Panc1 (cell line): ENCODE measurements at regions of chr1 and their contacts with region 1.

Region 1: GRCh38 chr1:83954166-83954823 is 44.6 kb downstream of the TTLL7 start:
- DNase-seq: no peak
- ATAC-seq: no peak
- H3K4me3 ChIP-seq: no peak overlapping the region
- H3K27ac ChIP-seq: no peak overlapping the region
- H3K4me1 ChIP-seq: no peaks in the 10 kb centered on the region
- H3K27me3 ChIP-seq: no peaks in the 10 kb centered on the region
- CTCF ChIP-seq: no peak

Region 2: GRCh38 chr1:82837766-82838465 is 1116.4 kb before region 1 on chr1:
- CTCF ChIA-PET with region 1: no interaction called
- POLR2A ChIA-PET with region 1: interaction called, 14 read pairs
- in situ Hi-C with region 1: no loop called
- intact Hi-C with region 1: no loop called
- DNase-seq: no peak
- ATAC-seq: no peak
- H3K4me3 ChIP-seq: no peak overlapping the region
- H3K27ac ChIP-seq: no peak overlapping the region
- H3K4me1 ChIP-seq: no peaks in the 10 kb centered on the region
- H3K27me3 ChIP-seq: peaks cover 2% of the 10 kb centered on the region; the same call in 1 of the 2 replicates
- CTCF ChIP-seq: no peak

Region 3: DNA sequence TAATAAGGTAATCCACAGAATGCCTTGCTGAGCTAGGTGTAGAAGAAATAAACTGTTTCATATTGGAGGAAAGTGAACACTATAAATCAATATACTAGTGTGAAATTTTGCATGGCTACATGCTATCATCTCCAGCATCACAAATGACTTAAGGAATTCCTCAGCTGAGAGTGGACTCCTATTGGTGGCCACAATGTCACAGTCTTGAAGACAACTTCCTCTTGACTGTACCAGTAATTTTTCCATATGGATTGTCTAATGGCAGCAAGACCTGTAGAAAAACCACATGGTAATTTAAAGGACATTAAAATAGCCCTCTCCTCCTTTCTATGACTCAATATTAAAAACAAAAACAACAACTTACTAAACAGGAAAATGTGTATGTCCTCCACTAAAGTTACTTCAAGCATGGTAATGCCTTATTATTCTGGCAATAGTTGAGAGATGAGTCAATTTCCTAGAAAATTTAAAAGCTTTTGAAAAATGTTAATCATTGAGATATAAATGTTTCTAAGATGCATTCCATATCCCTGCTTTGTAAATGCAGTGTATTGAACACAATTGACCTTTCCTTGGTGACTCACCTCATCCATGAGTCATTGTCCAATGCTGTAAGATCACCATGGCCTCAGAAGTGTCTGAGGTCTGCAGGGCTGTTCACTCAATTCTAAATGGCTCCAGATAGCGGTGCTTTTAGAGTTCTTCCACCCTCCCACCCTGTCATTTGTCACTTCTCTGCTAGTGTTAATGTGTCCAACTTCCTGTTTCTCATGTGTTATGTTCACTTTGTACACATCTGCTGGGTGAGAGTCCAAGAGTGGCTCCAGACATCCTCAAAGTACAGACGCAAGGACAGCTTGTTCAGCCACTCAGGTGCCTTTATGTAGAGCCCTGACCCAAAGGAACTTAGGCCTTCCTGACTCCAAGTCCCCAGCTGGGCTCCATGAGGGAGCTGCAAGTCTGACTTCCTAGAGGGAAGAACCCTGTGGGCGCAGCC is 411.2 kb after region 1 on chr1:
- CTCF ChIA-PET with region 1: no interaction called
- POLR2A ChIA-PET with region 1: no interaction called
- in situ Hi-C with region 1: no loop called
- intact Hi-C with region 1: no loop called
- DNase-seq: peak; percentile 95
- ATAC-seq: peak; percentile 97
- H3K4me3 ChIP-seq: peak overlapping the region in 1 of 2 experiments; percentile 1; a peak in 1 of 4 replicates
- H3K27ac ChIP-seq: peak overlapping the region; percentile 0; the same call in 1 of the 2 replicates
- H3K4me1 ChIP-seq: peaks cover 17% of the 10 kb centered on the region
- H3K27me3 ChIP-seq: no peaks in the 10 kb centered on the region
- CTCF ChIP-seq: no peak